ENCODE measurements at regions of chr15 and their contacts with region 1.

Region 1: GRCh38 chr15:65054333-65055200 is 9.4 kb downstream of the SLC51B start:
- DNase-seq: peak; percentile 44
- ATAC-seq: peak; percentile 61
- H3K4me3 Mint-ChIP-seq: no peak overlapping the region
- H3K27ac Mint-ChIP-seq: no peak overlapping the region
- H3K4me1 Mint-ChIP-seq: peaks cover 12% of the 10 kb centered on the region
- H3K27me3 Mint-ChIP-seq: no peaks in the 10 kb centered on the region
- CTCF ChIP-seq: no peak

Region 2: DNA sequence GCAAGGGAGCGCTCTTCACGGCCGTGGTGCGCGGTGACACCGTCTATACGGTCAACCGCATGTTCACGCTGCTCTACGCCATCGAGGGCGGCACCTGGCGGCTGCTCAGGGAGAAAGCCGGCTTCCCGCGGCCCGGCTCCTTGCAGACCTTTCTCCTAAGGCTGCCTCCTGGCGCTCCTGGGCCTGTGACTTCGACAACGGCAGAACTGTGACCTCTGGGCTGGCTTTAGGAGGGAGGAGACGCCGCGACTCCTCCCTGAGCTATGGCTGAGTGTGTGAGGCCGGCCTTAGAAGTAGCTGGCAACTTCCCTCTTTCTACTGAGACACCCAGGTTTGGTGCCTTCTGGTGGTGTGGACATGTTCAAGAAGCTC is 23.4 kb after region 1 on chr15:
- CTCF ChIA-PET with region 1: no interaction called
- POLR2A ChIA-PET with region 1: no interaction called
- intact Hi-C with region 1: loop called (anchors 1 kb)
- DNase-seq: peak; percentile 34
- ATAC-seq: peak; percentile 56
- H3K4me3 Mint-ChIP-seq: peak overlapping the region; percentile 58
- H3K27ac Mint-ChIP-seq: no peak overlapping the region
- H3K4me1 Mint-ChIP-seq: peaks cover 7% of the 10 kb centered on the region
- H3K27me3 Mint-ChIP-seq: peaks cover 50% of the 10 kb centered on the region
- CTCF ChIP-seq: no peak

Region 3: DNA sequence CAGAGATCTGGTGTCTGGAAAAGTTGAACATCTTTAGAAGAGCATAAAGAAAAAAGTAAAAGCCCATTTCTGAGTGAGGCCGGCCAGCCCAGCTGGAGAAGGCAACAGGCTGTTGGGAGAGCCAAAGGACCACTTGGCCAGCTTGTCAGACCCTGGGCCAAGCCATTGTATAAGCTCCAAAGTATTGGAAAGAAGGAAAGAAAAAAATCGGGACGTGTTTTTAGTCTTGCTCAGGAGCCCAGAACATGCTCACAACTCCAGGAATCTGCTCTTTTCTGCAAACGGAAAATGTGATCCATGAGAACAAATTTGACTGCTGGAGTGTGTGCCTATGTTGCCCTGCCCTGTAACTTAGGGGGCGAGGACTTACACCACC is 141.0 kb after region 1 on chr15:
- CTCF ChIA-PET with region 1: no interaction called
- POLR2A ChIA-PET with region 1: no interaction called
- intact Hi-C with region 1: no loop called
- DNase-seq: no peak
- ATAC-seq: no peak
- H3K4me3 Mint-ChIP-seq: no peak overlapping the region
- H3K27ac Mint-ChIP-seq: no peak overlapping the region
- H3K4me1 Mint-ChIP-seq: no peaks in the 10 kb centered on the region
- H3K27me3 Mint-ChIP-seq: no peaks in the 10 kb centered on the region
- CTCF ChIP-seq: no peak

Region 4: GRCh38 chr15:65384895-65385858 is 330.6 kb after region 1 on chr15:
- CTCF ChIA-PET with region 1: interaction called, 8 read pairs
- POLR2A ChIA-PET with region 1: no interaction called
- intact Hi-C with region 1: loop called (anchors 1 kb)
- DNase-seq: peak; percentile 68
- ATAC-seq: peak; percentile 84
- H3K4me3 Mint-ChIP-seq: peak overlapping the region; percentile 89
- H3K27ac Mint-ChIP-seq: no peak overlapping the region
- H3K4me1 Mint-ChIP-seq: peaks cover 10% of the 10 kb centered on the region
- H3K27me3 Mint-ChIP-seq: peaks cover 20% of the 10 kb centered on the region
- CTCF ChIP-seq: peak; percentile 12

Measured in activated B cell treated with CpG ODN at 0.5 μM for 24 hours (primary cell).